A673 (cell line): ENCODE measurements at regions of chr5 and their contacts with region 1.

Region 1: GRCh38 chr5:776792-777711 is 7.5 kb downstream of the ZDHHC11B start:
- DNase-seq: peak; percentile 76
- H3K4me3 ChIP-seq: peak overlapping the region; percentile 30
- H3K27ac ChIP-seq: no peak overlapping the region
- H3K4me1 ChIP-seq: no peaks in the 10 kb centered on the region
- H3K27me3 ChIP-seq: no peaks in the 10 kb centered on the region
- CTCF ChIP-seq: no peak

Region 2: GRCh38 chr5:683551-684481 is 93.2 kb before region 1 on chr5:
- CTCF ChIA-PET with region 1: no interaction called
- POLR2A ChIA-PET with region 1: no interaction called
- intact Hi-C with region 1: loop called (anchors 5 kb)
- DNase-seq: no peak
- H3K4me3 ChIP-seq: no peak overlapping the region
- H3K27ac ChIP-seq: no peak overlapping the region
- H3K4me1 ChIP-seq: no peaks in the 10 kb centered on the region
- H3K27me3 ChIP-seq: no peaks in the 10 kb centered on the region
- CTCF ChIP-seq: no peak